ENCODE measurements at regions of chr16 and their contacts with region 1.

Region 1: GRCh38 chr16:27515874-27516353 is 33.8 kb downstream of the GTF3C1 start:
- DNase-seq: peak; percentile 62
- ATAC-seq: peak; percentile 97
- H3K4me3 Mint-ChIP-seq: no peak overlapping the region
- H3K27ac Mint-ChIP-seq: peak overlapping the region; percentile 77
- H3K4me1 Mint-ChIP-seq: no peaks in the 10 kb centered on the region
- H3K27me3 Mint-ChIP-seq: no peaks in the 10 kb centered on the region
- CTCF ChIP-seq: peak; percentile 83

Region 2: GRCh38 chr16:27268376-27269299 is 247.3 kb before region 1 on chr16 and contains the start of gene NSMCE1:
- CTCF ChIA-PET with region 1: no interaction called
- POLR2A ChIA-PET with region 1: no interaction called
- DNase-seq: peak; percentile 96
- ATAC-seq: peak; percentile 95
- H3K4me3 Mint-ChIP-seq: peak within 1 kb of the TSS; percentile 81
- H3K27ac Mint-ChIP-seq: peak within 1 kb of the TSS; percentile 69
- H3K4me1 Mint-ChIP-seq: peaks cover 16% of the 10 kb centered on the region
- H3K27me3 Mint-ChIP-seq: peaks cover 4% of the 10 kb centered on the region
- CTCF ChIP-seq: no peak
- total RNA-seq, gene NSMCE1: 29.4 to 44.8 TPM (median 43.8 TPM) in 3 replicates

Region 3: DNA sequence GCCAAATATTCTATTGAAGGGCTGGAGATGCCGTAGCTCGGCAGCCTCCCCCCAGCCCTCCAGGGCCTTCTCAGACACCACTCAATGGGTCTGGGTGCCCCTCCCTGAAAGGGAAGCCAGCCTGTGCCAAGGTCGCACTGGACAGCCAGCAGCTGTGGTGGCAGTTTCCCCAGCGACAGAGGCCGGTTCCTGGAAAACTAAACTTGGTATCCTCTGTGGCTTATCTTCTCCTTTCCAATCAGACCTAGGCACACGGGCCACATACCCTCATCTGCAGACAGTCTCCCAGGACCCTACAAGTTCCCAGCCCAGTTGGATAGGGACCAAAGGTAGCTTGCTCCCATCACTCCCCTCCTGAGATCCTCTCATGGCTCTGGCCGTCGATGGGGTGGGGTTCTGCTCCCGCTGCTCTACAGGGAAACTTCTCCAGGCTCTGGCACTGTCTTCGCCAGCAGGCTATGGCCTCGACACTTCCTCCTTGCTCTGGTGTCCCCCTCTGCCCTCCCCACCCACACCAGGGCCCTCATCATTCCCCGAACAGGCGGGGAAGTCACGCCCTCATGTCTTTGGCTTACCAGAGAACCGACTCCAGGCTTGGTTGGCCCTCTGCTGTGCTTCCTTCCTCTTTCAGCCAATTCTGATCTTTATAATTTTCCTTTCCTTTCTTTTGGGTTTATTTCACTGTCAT is 132.2 kb before region 1 on chr16:
- CTCF ChIA-PET with region 1: no interaction called
- POLR2A ChIA-PET with region 1: no interaction called
- DNase-seq: no peak
- ATAC-seq: no peak
- H3K4me3 Mint-ChIP-seq: no peak overlapping the region
- H3K27ac Mint-ChIP-seq: no peak overlapping the region
- H3K4me1 Mint-ChIP-seq: no peaks in the 10 kb centered on the region
- H3K27me3 Mint-ChIP-seq: peaks cover 6% of the 10 kb centered on the region
- CTCF ChIP-seq: no peak

Region 4: DNA sequence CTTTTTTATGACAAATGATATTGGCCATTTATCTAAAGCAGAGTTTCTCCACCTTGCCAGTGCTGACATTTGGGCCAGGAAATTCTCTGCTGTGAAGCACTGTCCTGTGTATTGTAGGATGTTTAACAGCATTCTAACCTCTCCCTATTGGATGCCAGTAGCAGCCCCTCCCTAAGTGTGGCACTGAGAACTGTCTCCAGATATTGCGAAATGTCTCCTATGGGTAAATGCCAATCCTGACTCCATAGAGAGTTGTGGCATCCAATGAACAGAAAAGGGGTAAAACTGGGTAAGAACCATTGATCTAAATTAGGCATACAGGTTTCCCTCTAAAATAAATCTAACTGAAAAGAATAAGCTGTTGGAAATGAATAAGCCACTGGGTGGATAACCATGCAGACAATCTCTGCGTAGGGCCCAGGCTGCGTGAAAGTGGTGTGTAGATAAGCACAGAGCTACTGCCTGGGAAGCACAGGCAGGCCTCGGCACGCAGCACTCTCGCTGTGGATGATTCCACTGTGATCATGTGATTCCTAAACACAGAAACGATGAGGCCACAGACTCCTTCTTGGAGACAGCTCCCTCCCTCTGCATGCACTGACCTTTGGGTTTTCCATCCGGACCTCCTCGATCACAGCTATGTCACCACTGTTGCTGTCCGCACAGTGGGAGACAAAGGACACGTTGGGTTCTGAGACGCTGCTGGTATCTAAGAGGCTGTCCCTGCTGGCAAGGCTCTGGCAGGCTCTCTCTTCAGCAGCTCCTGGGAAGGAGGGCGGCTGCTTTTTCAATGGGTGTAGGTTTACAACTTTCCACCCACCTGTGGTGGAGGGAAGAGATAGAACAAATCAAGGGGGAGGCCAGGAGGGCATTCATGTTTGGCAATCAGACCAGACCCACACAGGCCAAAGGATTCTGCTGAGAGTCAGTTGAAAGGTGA is 10.3 kb before region 1 on chr16:
- CTCF ChIA-PET with region 1: interaction called, 16 read pairs
- POLR2A ChIA-PET with region 1: no interaction called
- DNase-seq: no peak
- ATAC-seq: no peak
- H3K4me3 Mint-ChIP-seq: no peak overlapping the region
- H3K27ac Mint-ChIP-seq: no peak overlapping the region
- H3K4me1 Mint-ChIP-seq: no peaks in the 10 kb centered on the region
- H3K27me3 Mint-ChIP-seq: no peaks in the 10 kb centered on the region
- CTCF ChIP-seq: no peak

Region 5: DNA sequence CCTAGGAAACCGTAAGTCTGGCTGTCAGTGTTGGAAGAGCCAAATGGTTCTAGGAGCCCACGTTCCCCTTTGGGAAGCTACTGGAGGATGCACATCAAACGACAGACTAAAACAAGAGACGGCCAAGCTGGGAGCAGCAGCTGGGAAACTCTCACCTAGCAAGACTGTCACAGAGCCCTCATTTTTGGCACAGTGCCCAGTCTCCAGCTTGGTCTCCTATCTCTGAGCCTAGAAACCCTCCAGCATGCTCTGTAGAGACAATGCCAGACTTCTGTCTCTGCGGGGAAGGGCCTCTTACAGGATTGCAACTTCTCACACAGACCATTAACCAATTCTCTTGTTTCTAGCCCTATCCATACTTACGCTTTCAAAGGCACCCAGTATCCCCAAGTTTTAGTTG is 10.3 kb after region 1 on chr16:
- CTCF ChIA-PET with region 1: interaction called, 10 read pairs
- POLR2A ChIA-PET with region 1: no interaction called
- DNase-seq: no peak
- ATAC-seq: no peak
- H3K4me3 Mint-ChIP-seq: no peak overlapping the region
- H3K27ac Mint-ChIP-seq: no peak overlapping the region
- H3K4me1 Mint-ChIP-seq: peaks cover 3% of the 10 kb centered on the region; the same call in 1 of the 2 replicates
- H3K27me3 Mint-ChIP-seq: no peaks in the 10 kb centered on the region
- CTCF ChIP-seq: no peak

Region 6: DNA sequence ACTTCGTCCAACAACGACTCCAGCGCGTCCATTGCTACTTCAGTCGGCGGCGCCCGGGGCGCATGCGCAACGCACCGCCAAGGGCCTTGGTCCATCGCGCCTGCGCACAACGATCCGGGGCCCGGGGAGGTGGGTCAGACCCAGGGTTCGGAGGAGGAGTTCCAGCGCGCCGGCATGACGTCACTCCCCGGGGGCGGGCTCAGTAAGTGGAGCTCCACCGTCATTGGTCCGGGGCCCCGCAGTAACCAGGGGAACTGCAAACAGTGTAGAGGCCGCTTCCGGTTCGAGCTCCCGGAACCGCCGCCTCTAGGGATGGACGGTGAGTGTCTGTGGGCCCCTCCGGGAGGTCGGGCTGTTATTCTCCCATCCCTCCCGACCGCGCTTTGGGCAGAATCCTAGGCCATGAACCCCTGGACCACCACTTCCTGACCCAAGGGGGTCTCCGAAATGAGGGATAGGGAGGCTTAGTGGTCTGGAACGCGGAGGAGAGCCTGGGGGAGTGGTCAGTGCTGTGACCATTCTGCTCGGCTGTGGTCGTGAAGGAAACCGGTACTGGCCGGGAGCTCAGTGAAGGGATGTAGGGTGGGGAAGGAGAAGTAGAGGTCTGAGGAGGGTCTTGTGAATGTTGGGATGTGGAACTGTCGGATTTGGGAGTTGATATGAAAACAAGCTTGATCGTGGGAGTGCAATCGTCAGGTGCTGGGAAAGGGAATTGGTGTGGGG is 34.1 kb after region 1 on chr16 and contains the starts of genes GTF3C1 and KATNIP:
- CTCF ChIA-PET with region 1: interaction called, 20 read pairs
- POLR2A ChIA-PET with region 1: no interaction called
- DNase-seq: peak; percentile 100
- ATAC-seq: peak; percentile 97
- H3K4me3 Mint-ChIP-seq: peak within 1 kb of the TSS; percentile 100
- H3K27ac Mint-ChIP-seq: peak within 1 kb of the TSS; percentile 96
- H3K4me1 Mint-ChIP-seq: peaks cover 18% of the 10 kb centered on the region
- H3K27me3 Mint-ChIP-seq: peaks cover 2% of the 10 kb centered on the region; the same call in 1 of the 2 replicates
- CTCF ChIP-seq: no peak
- total RNA-seq, gene GTF3C1: 116 to 146 TPM (median 118 TPM) in 3 replicates
- total RNA-seq, gene KATNIP: 17.2 to 23.0 TPM (median 17.5 TPM) in 3 replicates

Measured in WTC11 (cell line).